Left ventricle myocardium inferior (tissue), 1 donor: ENCODE measurements at regions of chr7 and their contacts with region 1.

Region 1: DNA sequence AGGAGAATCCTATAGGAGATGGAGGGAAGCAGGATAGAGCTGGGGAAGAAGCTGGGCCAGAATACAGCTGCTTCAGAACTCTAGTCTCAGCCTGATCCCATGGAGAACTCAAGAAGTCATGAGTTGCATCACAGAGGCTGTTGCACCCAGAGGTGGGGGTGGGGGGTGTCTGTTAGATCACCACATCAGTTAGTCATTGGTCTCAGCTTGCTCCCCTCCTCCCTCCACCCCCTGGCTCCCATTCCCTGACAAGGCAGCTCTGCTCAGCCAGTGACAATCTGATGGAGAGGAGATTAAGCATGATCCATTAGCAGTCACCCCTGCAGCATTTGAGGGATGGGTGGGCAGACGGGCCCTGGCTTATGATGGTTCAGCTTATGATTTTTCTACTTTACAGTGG is 58.4 kb upstream of the FGL2 start:
- DNase-seq: no peak
- H3K4me3 ChIP-seq: no peak overlapping the region
- H3K27ac ChIP-seq: peak overlapping the region; percentile 77
- H3K4me1 ChIP-seq: peaks cover 10% of the 10 kb centered on the region
- H3K27me3 ChIP-seq: no peaks in the 10 kb centered on the region
- CTCF ChIP-seq: no peak

Region 2: DNA sequence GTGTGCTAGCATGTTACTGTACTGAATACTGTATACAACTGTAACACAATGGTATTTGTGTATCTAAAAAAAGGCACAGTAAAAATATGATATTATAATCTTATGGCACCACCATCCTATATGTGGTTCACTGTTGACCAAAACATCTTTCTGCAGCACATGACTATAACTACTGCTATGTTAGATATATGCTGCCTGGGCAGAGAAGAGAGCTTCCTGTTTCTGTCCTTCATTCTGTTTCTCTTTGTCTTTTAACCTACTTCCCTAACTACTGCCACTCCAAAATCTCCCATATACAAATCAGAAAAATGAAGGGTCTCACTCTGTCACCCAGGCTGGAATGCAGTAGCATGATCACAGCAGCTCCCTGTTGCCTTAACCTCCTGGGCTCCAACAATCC is 49.6 kb before region 1 on chr7:
- intact Hi-C with region 1: no loop called
- DNase-seq: no peak
- H3K4me3 ChIP-seq: no peak overlapping the region
- H3K27ac ChIP-seq: no peak overlapping the region
- H3K4me1 ChIP-seq: no peaks in the 10 kb centered on the region
- H3K27me3 ChIP-seq: no peaks in the 10 kb centered on the region
- CTCF ChIP-seq: no peak

Region 3: GRCh38 chr7:77315182-77315591 is 57.2 kb after region 1 on chr7:
- intact Hi-C with region 1: loop called (anchors 10 kb)
- DNase-seq: peak; percentile 31
- H3K4me3 ChIP-seq: no peak overlapping the region
- H3K27ac ChIP-seq: no peak overlapping the region
- H3K4me1 ChIP-seq: peaks cover 38% of the 10 kb centered on the region
- H3K27me3 ChIP-seq: no peaks in the 10 kb centered on the region
- CTCF ChIP-seq: no peak

Region 4: DNA sequence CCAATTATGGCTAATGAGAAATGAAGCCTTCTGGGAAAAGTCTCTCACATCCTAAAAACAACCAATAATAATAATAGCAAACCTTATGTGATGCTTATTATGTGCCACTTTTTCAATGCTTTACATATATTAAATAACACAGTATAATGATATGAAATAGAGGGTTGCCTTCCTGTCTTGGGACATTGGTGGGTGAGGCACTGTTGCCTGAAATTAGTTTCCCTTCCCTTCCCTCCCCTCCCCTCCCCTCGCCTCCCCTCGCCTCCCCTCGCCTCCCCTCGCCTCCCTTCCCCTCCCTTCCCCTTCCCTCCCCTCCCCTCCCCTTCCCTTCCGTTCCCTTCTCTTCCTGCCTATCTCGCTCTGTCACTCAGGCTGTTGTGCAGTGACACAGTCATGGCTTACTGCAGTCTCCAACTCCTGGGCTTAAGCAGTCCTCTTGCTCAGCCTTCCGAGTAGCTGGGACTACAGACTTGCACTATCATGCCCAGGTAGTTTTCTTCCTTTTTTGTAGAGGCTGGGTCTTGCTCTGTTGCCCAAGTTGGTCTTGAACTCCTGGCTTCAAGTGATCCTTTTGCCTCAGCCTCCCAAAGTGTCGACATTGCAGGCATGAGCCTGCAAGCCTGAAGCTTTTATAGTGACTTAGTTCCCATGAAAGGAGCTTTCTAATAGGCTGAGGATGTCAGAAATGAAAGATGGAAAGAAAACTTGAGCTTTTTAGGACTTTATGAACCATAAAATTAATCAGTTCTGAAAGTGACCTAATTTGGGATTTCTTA is 588.5 kb after region 1 on chr7:
- intact Hi-C with region 1: no loop called
- DNase-seq: no peak
- H3K4me3 ChIP-seq: no peak overlapping the region
- H3K27ac ChIP-seq: no peak overlapping the region
- H3K4me1 ChIP-seq: no peaks in the 10 kb centered on the region
- H3K27me3 ChIP-seq: no peaks in the 10 kb centered on the region
- CTCF ChIP-seq: no peak